ENCODE measurements at regions of chr17 and their contacts with region 1.

Region 1: GRCh38 chr17:33459078-33459940 is 166.2 kb upstream of the ASIC2 start:
- DNase-seq: peak; percentile 44
- ATAC-seq: peak; percentile 93
- H3K4me3 ChIP-seq: no peak overlapping the region
- H3K27ac ChIP-seq: no peak overlapping the region
- H3K4me1 ChIP-seq: peaks cover 3% of the 10 kb centered on the region; the same call in 1 of the 2 replicates
- H3K27me3 ChIP-seq: no peaks in the 10 kb centered on the region
- CTCF ChIP-seq: peak in 2 of 3 experiments; percentile 10 to 35; a peak in 2 of 6 replicates
- EP300 ChIP-seq: peak; percentile 21 to 44; a peak in 1 of 4 replicates
- POLR2A ChIP-seq: no peak
- RAD21 ChIP-seq: no peak

Region 2: DNA sequence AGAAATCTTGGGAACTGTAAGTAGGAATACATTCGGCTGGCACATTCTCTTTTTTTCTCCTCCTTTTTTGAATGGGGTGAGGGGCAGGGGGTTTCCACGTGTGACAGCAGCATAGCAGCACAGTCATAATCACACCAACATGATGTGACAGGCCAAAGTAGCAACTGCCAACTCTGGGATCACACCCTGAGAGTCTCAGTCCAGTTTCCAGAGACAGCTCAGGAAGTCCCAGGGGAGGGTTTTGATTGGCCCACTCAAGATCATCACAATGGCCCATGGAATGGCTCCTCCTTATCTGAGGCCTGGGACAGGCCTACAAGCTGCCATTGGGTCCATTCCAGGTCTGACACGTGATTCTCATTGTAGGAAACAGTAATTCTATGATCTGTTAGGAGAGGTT is 40.8 kb after region 1 on chr17:
- CTCF ChIA-PET with region 1: interaction called, 5 read pairs
- POLR2A ChIA-PET with region 1: interaction called, 6 read pairs
- RAD21 ChIA-PET with region 1: interaction called, 23 read pairs
- SMC1A ChIA-PET with region 1: interaction called, 19 read pairs
- in situ Hi-C with region 1: no loop called
- intact Hi-C with region 1: loop called (anchors 1 kb)
- DNase-seq: peak; percentile 17
- ATAC-seq: peak; percentile 90
- H3K4me3 ChIP-seq: no peak overlapping the region
- H3K27ac ChIP-seq: no peak overlapping the region
- H3K4me1 ChIP-seq: no peaks in the 10 kb centered on the region
- H3K27me3 ChIP-seq: no peaks in the 10 kb centered on the region
- CTCF ChIP-seq: no peak
- EP300 ChIP-seq: peak; percentile 78 to 84; a peak in 3 of 4 replicates
- POLR2A ChIP-seq: no peak
- RAD21 ChIP-seq: no peak

Region 3: DNA sequence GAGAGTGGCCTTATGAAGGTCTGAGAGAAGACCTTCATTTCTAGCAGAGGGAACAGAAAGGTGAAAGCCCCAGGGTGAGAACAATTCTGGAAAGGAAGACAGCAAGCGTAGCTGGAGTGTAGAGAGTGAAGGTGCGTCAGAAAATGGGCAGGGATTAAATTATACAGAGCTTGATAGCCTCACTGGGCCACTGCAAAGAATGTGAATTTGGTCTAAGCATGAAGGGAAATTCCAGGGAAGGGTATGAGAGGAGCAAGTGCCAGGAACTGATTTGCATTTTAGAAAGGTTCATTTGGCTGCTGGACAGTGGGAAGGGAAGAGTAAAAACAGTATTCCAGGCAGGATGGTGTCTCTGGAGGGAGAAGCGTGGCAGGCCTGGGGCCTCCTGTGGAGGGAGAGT is 107.9 kb after region 1 on chr17:
- CTCF ChIA-PET with region 1: no interaction called
- POLR2A ChIA-PET with region 1: interaction called, 4 read pairs
- RAD21 ChIA-PET with region 1: interaction called, 8 read pairs
- SMC1A ChIA-PET with region 1: no interaction called
- in situ Hi-C with region 1: no loop called
- intact Hi-C with region 1: loop called (anchors 2 kb)
- DNase-seq: no peak
- ATAC-seq: no peak
- H3K4me3 ChIP-seq: no peak overlapping the region
- H3K27ac ChIP-seq: no peak overlapping the region
- H3K4me1 ChIP-seq: no peaks in the 10 kb centered on the region
- H3K27me3 ChIP-seq: no peaks in the 10 kb centered on the region
- CTCF ChIP-seq: no peak
- EP300 ChIP-seq: no peak
- POLR2A ChIP-seq: no peak
- RAD21 ChIP-seq: no peak

Region 4: GRCh38 chr17:33667052-33667509 is 207.8 kb after region 1 on chr17:
- CTCF ChIA-PET with region 1: no interaction called
- POLR2A ChIA-PET with region 1: no interaction called
- RAD21 ChIA-PET with region 1: no interaction called
- SMC1A ChIA-PET with region 1: no interaction called
- in situ Hi-C with region 1: no loop called
- intact Hi-C with region 1: loop called (anchors 5 kb)
- DNase-seq: peak; percentile 48
- ATAC-seq: peak; percentile 87
- H3K4me3 ChIP-seq: no peak overlapping the region
- H3K27ac ChIP-seq: no peak overlapping the region
- H3K4me1 ChIP-seq: no peaks in the 10 kb centered on the region
- H3K27me3 ChIP-seq: no peaks in the 10 kb centered on the region; a peak in 2 of 4 replicates
- CTCF ChIP-seq: no peak
- EP300 ChIP-seq: peak in 1 of 2 experiments; percentile 6; a peak in 2 of 4 replicates
- POLR2A ChIP-seq: no peak
- RAD21 ChIP-seq: no peak